Heart left ventricle (tissue), 16 donors: ENCODE measurements at regions of chr11 and their contacts with region 1.

Region 1: DNA sequence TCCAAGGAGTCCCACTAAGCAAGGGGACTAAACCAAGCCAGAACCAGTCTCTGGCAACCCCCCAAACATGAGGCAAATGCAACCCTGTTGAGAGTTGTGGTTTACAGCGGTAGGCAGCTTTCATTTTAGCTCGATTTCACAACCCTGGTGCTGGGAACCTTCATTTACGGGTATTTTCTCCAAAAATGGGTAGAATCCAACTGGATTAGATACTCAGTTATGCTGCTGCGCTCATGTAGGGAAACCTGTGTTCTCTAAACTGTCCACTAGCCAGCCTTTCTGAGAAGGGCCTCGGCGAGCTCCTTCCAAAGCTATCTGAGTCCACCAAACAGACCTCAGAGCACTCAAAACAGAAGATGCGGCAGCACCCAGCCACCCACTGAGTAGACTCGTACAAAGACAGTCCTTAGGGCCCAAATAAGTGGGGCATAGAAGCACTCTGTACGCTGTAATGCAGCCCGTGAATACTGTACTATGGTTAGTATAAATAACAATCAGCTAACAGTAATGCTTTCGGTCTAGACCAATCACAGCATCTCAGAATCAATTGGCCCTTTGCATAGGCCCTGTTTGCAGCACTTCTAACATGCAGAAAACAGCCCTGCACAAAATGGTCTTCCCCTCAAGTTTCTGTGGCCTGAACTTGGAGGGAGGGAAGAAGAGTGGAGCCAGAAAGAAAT is 104.7 kb downstream of the ETS1 start:
- DNase-seq: peak in 3 of 5 donors; percentile 21 to 56 (median 52)
- ATAC-seq: peak in 3 of 4 donors; percentile 16 to 67 (median 21)
- H3K4me3 ChIP-seq: peak overlapping the region in 4 of 12 donors; percentile 11 to 37 (median 30)
- H3K27ac ChIP-seq: peak overlapping the region in 11 of 12 donors; percentile 34 to 81 (median 71)
- H3K4me1 ChIP-seq: peaks cover 3 to 88% (median 70%) of the 10 kb centered on the region in 12 donors
- H3K27me3 ChIP-seq: no peaks in the 10 kb centered on the region
- CTCF ChIP-seq: no peak
- POLR2A ChIP-seq: no peak

Region 2: GRCh38 chr11:128522055-128522942 is 39.6 kb after region 1 on chr11:
- intact Hi-C with region 1: loop called in 4 of 10 experiments (anchors 5 kb)
- DNase-seq: peak; percentile 95 to 97 (median 96)
- ATAC-seq: peak; percentile 93 to 99 (median 96)
- H3K4me3 ChIP-seq: peak overlapping the region; percentile 63 to 93 (median 83)
- H3K27ac ChIP-seq: peak overlapping the region; percentile 94 to 98 (median 96)
- H3K4me1 ChIP-seq: peaks cover 8 to 74% (median 42%) of the 10 kb centered on the region in 12 donors
- H3K27me3 ChIP-seq: no peaks in the 10 kb centered on the region
- CTCF ChIP-seq: peak in 1 of 12 donors; percentile 5
- POLR2A ChIP-seq: peak; percentile 79 to 97

Region 3: DNA sequence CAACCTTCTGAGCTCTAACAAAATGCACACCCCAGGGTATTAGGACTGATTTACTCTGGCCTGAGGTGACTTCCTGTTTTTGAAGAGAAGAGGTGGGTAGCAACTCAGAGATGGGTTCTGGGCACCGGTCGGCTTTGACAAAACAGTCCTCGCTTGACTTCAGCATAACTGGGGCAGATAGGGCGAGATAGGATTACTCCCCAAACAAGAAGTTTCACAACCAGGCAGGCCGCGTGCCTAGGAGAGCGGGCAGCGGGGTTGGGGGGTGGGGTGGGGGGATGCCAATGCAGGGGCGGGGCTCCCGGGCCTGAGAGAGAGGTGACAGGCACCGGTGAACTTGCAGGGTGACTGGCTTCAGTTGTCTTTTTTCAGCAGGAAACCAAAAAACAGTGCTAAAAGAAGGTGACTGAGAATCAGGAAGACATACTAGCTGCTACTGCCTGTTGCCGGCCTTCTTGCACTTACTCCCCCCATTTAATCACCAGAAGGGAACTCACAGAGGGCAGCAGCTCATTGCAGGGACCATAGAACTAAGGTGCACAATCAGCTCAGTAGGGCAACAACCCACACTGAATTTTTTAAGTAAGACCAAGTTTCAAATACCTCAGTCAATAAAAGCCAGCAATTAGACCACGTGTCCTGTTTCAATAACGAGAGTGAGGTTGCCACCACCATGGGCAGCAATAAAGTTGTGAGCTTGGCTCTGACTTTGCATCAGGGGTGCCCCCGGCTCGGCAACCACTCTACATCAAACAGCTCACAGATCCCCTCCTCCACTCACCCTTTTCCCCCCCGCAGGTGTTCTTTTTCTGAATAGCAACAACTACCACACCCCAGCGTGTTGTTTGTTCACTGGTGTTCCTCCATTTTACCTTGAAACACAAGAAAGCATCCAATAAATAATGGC is 141.9 kb after region 1 on chr11:
- intact Hi-C with region 1: loop called in 6 of 10 experiments (anchors 5 to 10 kb)
- DNase-seq: no peak
- ATAC-seq: no peak
- H3K4me3 ChIP-seq: no peak overlapping the region
- H3K27ac ChIP-seq: peak overlapping the region in 1 of 12 donors; percentile 81
- H3K4me1 ChIP-seq: peaks cover 0 to 76% (median 14%) of the 10 kb centered on the region in 12 donors
- H3K27me3 ChIP-seq: no peaks in the 10 kb centered on the region
- CTCF ChIP-seq: no peak
- POLR2A ChIP-seq: no peak